Gastrocnemius medialis (tissue), 4 donors: ENCODE measurements at regions of chr4 and their contacts with region 1.

Region 1: DNA sequence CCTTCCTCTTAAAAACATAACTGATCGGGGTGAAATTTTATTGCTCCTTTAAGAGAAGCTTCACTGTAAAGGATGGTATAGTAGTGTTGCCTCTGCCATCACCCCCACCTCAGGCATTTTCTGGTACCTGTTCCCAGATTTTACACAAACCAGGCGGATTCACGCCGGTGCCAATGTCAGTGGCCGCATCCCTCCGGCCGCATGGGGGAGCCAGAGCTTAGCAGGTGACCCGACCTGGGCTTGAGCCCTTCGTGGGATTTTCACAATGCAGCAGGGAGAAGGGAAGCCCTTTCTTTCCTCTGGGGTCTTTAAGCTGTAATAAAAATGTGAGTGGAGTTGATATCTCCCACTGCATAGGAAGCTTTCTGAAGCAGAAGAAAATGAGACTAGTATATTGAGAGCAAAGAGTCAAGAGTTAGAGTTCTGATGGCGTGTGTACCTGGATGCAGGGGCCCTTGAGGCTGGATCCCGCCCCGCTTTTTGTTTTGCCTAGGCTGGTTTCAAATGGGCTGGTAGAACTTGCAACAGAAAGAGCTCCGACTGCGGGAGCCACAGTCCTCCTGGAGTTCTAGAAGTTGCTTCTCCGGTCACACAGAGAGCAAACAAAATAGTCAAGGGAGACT is 59.4 kb downstream of the POLR2B start:
- DNase-seq: no peak
- ATAC-seq: peak in 1 of 2 donors; percentile 58
- H3K4me3 ChIP-seq: no peak overlapping the region
- H3K27ac ChIP-seq: no peak overlapping the region
- H3K4me1 ChIP-seq: peaks cover 0 to 17% of the 10 kb centered on the region in 2 donors
- H3K27me3 ChIP-seq: no peaks in the 10 kb centered on the region
- CTCF ChIP-seq: peak; percentile 34 to 67 (median 49)
- POLR2A ChIP-seq: no peak

Region 2: GRCh38 chr4:57124145-57124544 is 86.1 kb after region 1 on chr4:
- in situ Hi-C with region 1: no loop called
- intact Hi-C with region 1: no loop called
- DNase-seq: no peak
- ATAC-seq: no peak
- H3K4me3 ChIP-seq: no peak overlapping the region
- H3K27ac ChIP-seq: no peak overlapping the region
- H3K4me1 ChIP-seq: no peaks in the 10 kb centered on the region
- H3K27me3 ChIP-seq: no peaks in the 10 kb centered on the region
- CTCF ChIP-seq: no peak
- POLR2A ChIP-seq: no peak

Region 3: DNA sequence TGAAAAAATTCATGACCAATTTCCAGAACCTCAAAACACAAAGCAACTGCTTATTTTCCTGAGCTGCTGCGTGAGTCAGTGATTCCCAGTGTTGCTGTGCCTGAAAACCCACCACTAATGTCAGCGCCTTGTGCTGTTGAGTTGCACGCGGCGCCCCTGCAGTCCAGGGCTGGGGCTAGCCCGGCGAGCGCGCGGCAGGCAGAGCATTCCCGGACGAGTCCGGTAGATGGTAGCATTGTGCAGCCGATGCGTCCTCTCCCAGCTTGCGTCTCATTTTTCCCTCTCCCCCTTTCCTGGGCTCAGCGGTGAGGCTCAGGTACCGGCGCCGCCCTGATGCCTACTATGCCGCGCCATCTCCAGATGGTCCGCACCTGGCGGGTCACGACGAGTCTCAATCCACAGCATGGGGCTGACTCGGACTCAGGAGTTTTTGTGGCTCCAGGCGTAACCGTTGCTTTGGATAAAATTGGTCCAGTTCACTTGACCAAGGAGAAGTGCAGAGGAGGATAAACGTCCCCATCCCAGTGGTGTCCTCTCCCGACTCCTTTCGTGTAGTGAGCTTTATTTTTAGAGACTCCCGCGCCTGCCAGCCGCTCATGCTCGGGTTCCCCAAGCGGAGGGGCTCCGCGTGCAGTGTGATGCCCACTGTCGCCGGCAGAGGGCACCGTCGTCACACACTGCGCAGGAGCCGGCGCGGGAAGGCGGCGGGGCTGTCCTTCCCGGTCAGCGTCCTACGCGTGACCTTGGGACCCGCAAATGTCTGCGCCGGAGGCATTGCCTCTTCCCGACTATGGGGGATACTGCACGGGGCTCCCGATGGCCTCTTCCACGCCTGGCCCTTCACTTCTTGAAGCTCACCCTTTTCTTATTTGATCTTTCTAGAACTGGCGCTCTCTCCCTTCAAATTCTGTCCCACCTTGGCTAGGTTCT is 125.7 kb after region 1 on chr4:
- in situ Hi-C with region 1: no loop called
- intact Hi-C with region 1: loop called (anchors 5 kb)
- DNase-seq: peak; percentile 33 to 46
- ATAC-seq: peak; percentile 89 to 96
- H3K4me3 ChIP-seq: peak overlapping the region; percentile 53 to 77 (median 60)
- H3K27ac ChIP-seq: peak overlapping the region; percentile 25 to 44 (median 36)
- H3K4me1 ChIP-seq: peaks cover 0 to 4% of the 10 kb centered on the region in 2 donors
- H3K27me3 ChIP-seq: peaks cover 0 to 2% (median 0%) of the 10 kb centered on the region in 3 donors
- CTCF ChIP-seq: peak; percentile 70 to 85 (median 79)
- POLR2A ChIP-seq: no peak